Mammary epithelial cell (primary cell): ENCODE measurements at regions of chr19 and their contacts with region 1.

Region 1: DNA sequence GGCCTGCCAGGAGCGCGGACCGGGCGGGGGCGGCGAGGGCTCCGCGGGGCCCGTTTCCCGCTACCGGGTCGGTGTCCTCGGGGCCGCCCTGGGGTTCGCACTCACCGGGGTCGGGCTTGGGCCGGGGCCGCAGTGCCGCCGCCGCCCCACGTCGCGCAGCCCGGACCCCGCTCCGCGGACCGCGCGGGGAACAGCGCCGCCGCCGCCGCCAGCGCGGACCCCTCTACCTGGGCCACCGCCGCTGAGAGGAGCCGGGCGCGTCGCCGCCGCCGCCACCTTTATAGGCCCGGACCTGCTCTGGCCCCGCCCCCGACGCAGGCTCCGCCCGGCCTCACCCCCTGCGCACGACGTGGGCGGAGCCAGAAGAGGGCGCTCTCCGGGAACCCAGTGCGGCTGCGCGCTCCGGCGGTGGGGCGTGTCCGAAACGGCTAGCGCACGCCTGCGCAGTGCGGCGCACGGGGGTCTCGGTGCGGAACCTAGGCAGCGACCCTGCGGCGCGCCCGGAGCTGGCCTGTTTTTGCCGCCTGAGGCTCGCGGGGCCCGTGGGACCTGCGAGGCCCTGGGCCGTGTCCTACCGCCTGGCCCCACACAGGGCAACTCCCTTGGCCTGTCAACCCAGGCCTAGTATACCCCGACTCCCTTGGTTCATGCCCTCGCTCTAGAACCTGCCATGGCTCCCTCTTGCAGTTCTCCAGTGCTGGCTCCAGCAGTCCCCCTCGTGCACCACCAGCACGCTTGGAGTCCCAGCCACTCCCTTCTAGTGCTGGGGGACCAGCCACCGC is at the start of gene MKNK2:
- DNase-seq: peak; percentile 79
- H3K4me3 ChIP-seq: peak within 1 kb of the TSS; percentile 67 to 98 (median 97)
- H3K27ac ChIP-seq: peak within 1 kb of the TSS; percentile 48
- H3K4me1 ChIP-seq: peaks cover 54% of the 10 kb centered on the region
- H3K27me3 ChIP-seq: no peaks in the 10 kb centered on the region
- CTCF ChIP-seq: peak; percentile 27 to 59
- total RNA-seq, gene MKNK2: 91.7 to 248 TPM

Region 2: DNA sequence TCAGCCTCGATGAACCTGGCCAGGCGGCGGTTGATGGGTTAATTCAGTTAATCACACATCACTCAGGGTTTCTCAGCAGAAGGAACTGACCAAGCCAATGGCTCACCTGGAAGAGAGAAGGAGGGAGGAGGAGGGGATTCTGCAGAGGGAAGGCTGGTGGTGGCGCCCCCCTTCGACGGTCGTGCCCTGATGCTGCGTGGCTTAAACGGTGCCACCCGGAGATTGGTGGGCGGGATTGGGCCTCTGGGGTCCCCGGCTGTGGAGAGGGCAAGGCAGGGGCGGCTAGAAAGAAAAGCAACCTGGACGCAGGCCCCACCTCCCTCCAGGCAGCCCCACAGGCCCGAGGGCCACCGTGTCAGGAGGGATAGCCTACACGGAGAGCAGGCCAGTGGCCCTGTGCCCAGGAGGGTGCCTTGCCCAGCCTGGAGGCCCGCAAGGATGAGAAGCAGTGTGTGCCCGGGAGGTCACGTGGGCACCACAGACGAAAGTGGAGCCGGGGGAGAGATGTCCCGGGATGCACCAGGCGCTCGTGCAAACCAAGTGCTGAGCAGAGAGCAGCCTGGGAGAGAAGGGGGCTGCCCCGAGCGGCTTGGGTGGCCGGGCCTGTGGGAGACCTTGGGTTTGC is 94.2 kb before region 1 on chr19:
- CTCF ChIA-PET with region 1: no interaction called
- dilution Hi-C with region 1: no loop called
- in situ Hi-C with region 1: no loop called
- intact Hi-C with region 1: no loop called
- DNase-seq: no peak
- H3K4me3 ChIP-seq: no peak overlapping the region
- H3K27ac ChIP-seq: no peak overlapping the region
- H3K4me1 ChIP-seq: no peaks in the 10 kb centered on the region
- H3K27me3 ChIP-seq: no peaks in the 10 kb centered on the region
- CTCF ChIP-seq: no peak

Region 3: DNA sequence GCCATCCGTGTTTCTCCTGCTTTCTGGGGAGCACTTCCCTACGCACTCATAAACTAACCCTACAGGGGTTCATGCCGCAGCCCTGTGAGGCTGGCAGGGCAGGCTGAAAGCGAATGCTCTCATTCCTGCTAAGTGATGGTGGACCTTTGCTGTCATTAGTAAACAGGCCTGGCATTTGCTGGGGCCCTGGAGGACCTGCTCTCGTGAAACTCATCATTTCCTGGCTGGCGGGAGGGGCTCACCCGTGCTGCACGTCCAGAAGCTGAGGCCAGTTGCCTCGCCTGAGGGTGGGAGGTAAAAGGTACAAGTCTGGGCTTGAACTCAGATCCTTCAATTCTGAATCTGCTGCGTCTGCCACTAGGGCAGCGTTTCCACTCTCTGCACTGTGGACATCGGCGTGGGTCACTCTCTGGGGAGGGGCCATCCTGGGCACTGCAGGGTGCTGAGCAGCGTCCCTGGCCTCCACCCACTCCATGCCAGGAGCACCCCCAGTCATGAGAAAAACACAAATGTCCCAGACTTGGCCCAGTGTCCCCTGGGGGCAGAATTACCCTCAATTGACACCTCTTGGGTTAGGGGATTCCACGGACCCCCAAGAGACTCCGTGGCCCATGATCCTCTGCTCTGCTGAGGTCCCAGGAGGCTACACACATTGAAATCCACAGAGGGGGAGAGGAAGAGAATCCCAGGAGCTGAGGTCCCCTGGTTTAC is 38.0 kb after region 1 on chr19:
- CTCF ChIA-PET with region 1: no interaction called
- dilution Hi-C with region 1: no loop called
- in situ Hi-C with region 1: no loop called
- intact Hi-C with region 1: loop called (anchors 5 kb)
- DNase-seq: peak; percentile 93
- H3K4me3 ChIP-seq: peak overlapping the region in 1 of 3 experiments; percentile 0
- H3K27ac ChIP-seq: peak overlapping the region; percentile 87
- H3K4me1 ChIP-seq: peaks cover 78% of the 10 kb centered on the region
- H3K27me3 ChIP-seq: no peaks in the 10 kb centered on the region
- CTCF ChIP-seq: peak; percentile 15 to 38